Mammary epithelial cell (primary cell): ENCODE measurements at regions of chr6 and their contacts with region 1.

Region 1: DNA sequence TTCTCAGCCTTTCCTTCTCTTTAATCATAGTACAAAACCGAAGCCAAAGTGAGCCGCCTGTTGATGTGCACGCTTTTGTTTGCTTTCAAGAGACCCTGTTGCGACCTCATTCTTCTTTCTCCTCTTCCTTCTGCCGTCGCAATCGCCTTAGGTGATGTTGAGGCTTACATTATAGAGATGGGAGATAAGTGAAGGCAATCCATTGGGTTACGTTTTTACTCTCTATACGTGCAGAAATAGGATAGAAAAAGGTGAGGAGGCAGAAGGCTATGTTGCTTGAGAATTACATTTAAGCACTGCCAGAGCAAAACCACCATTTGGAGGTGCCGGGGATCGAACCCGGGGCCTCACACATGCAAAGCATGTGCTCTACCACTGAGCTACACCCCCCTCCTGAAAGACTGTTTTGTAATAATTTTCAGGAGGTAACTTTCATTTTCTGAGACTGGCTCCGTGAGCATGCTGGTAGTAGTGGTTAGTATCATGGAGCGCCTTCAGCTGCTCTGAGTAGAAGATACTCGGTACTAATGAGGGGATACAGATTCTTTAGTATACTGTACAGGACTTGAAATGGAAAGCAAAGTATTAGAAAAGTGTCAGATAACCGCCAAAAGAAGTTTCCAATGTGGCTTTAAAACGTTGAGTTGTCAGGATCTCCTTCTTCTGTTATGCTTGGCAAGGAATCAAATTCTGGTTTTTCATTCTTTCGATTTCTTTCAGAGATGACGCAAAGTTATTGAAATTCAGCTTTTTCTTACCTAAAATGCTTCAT is 165.6 kb downstream of the TRIM27 start:
- DNase-seq: peak; percentile 84
- H3K4me3 ChIP-seq: peak overlapping the region; percentile 45 to 50 (median 49)
- H3K27ac ChIP-seq: peak overlapping the region; percentile 18
- H3K4me1 ChIP-seq: no peaks in the 10 kb centered on the region
- H3K27me3 ChIP-seq: no peaks in the 10 kb centered on the region
- CTCF ChIP-seq: no peak

Region 2: DNA sequence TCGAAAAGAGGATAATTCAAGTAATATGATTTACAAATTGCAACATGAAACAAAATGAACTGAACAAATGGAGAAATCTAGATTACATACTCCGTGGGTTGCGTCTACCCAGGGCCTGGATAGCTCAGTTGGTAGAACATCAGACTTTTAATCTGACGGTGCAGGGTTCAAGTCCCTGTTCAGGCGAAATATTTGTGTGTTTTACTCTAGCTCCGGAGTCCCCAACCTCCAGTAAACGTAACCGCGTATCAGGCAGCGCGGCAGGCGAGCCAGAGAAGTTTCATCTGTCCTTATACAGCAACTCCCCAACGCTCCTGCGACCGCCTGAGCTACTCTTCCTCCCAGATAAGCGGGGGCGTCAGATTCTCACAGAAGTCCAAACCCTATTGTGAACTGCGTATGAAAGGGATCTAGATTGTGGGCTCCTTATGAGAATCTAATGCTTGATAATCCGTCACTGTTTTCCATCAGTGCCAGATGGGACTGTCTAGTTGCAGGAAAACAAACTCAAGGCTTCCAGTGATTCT is 10.5 kb before region 1 on chr6:
- CTCF ChIA-PET with region 1: no interaction called
- dilution Hi-C with region 1: no loop called
- in situ Hi-C with region 1: no loop called
- intact Hi-C with region 1: loop called (anchors 1 kb)
- DNase-seq: peak; percentile 92
- H3K4me3 ChIP-seq: peak overlapping the region; percentile 46 to 62 (median 56)
- H3K27ac ChIP-seq: no peak overlapping the region
- H3K4me1 ChIP-seq: peaks cover 12% of the 10 kb centered on the region
- H3K27me3 ChIP-seq: no peaks in the 10 kb centered on the region
- CTCF ChIP-seq: no peak

Region 3: DNA sequence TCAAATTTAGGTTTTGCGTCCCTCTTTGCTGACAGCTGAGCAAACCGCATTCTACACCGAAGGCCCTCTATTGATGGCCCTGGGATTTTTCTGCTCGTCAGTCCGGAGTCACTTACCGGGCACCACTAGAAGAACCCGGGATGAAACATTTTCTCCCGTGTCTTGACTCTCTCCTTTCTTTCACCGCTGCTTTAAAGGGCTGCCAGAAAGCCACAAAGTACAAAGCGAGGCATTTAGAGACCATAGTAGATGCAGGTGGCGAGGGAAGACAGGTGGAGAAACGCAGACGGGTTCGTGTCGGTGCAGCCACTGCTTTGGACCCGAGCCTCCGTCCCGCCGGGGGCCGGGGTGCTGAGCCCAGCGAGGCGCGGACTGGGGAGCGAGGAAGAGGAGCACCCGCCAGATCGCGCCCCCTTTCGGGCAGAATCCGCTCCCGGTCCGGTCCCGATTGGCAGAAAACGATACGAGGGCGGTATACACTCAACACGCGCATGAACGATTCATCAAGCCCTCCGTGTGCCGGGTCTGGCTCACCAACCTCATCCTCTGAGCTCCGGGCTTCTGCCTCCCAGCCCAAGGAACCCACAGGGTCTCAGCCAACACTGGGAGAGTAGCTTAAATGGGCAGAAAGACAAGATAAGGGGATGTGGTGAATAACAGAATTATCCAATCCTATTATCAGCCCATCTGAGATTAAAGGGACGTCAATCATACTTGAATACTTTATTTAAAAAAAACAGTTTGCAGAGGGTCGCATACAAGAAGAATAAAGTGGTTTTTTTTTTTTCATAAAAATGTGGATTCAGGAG is 80.6 kb after region 1 on chr6:
- CTCF ChIA-PET with region 1: no interaction called
- dilution Hi-C with region 1: no loop called
- in situ Hi-C with region 1: no loop called
- intact Hi-C with region 1: no loop called
- DNase-seq: peak; percentile 80
- H3K4me3 ChIP-seq: peak overlapping the region; percentile 73 to 100 (median 78)
- H3K27ac ChIP-seq: no peak overlapping the region
- H3K4me1 ChIP-seq: no peaks in the 10 kb centered on the region
- H3K27me3 ChIP-seq: no peaks in the 10 kb centered on the region
- CTCF ChIP-seq: peak; percentile 37 to 81